Activated CD4-positive, alpha-beta T cell treated with anti-CD3 and anti-CD28 coated beads for 36 hours (primary cell): ENCODE measurements at regions of chr22 and their contacts with region 1.

Region 1: GRCh38 chr22:39598017-39598965 is 27.7 kb downstream of the CACNA1I start:
- DNase-seq: peak; percentile 94
- ATAC-seq: peak; percentile 86
- H3K4me3 Mint-ChIP-seq: peak overlapping the region; percentile 23
- H3K27ac Mint-ChIP-seq: peak overlapping the region; percentile 6
- H3K4me1 Mint-ChIP-seq: peaks cover 30% of the 10 kb centered on the region
- H3K27me3 Mint-ChIP-seq: peaks cover 4% of the 10 kb centered on the region

Region 2: DNA sequence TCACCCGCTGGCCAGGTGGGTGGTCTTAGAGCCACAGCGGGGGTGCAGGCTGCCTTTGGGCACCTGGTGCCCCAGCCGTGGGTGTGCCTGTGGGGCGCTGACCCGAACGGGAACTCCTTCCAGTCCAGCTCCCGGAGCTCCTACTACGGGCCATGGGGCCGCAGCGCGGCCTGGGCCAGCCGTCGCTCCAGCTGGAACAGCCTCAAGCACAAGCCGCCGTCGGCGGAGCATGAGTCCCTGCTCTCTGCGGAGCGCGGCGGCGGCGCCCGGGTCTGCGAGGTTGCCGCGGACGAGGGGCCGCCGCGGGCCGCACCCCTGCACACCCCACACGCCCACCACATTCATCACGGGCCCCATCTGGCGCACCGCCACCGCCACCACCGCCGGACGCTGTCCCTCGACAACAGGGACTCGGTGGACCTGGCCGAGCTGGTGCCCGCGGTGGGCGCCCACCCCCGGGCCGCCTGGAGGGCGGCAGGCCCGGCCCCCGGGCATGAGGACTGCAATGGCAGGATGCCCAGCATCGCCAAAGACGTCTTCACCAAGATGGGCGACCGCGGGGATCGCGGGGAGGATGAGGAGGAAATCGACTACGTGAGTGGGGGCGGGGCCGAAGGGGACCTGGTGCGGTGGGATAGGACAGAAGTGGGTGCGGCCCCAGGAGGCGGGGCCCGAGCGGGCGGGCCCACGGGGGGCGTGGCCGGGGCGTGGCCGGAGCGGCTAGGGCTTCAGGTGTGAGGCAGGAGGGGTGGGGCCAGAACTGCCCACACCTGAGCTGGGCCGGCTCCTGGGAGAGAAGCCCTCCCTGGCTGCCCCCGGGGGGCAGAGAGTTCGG is 63.8 kb after region 1 on chr22:
- CTCF ChIA-PET with region 1: no interaction called
- POLR2A ChIA-PET with region 1: no interaction called
- intact Hi-C with region 1: loop called in 1 of 2 experiments (anchors 1 kb)
- DNase-seq: peak; percentile 92
- ATAC-seq: peak; percentile 79
- H3K4me3 Mint-ChIP-seq: peak overlapping the region; percentile 69
- H3K27ac Mint-ChIP-seq: no peak overlapping the region
- H3K4me1 Mint-ChIP-seq: peaks cover 47% of the 10 kb centered on the region
- H3K27me3 Mint-ChIP-seq: peaks cover 4% of the 10 kb centered on the region

Region 3: GRCh38 chr22:39690881-39691605 is 92.8 kb after region 1 on chr22:
- CTCF ChIA-PET with region 1: no interaction called
- POLR2A ChIA-PET with region 1: no interaction called
- intact Hi-C with region 1: no loop called
- DNase-seq: peak; percentile 71
- ATAC-seq: peak; percentile 84
- H3K4me3 Mint-ChIP-seq: peak overlapping the region; percentile 19
- H3K27ac Mint-ChIP-seq: no peak overlapping the region
- H3K4me1 Mint-ChIP-seq: peaks cover 9% of the 10 kb centered on the region
- H3K27me3 Mint-ChIP-seq: peaks cover 9% of the 10 kb centered on the region

Region 4: DNA sequence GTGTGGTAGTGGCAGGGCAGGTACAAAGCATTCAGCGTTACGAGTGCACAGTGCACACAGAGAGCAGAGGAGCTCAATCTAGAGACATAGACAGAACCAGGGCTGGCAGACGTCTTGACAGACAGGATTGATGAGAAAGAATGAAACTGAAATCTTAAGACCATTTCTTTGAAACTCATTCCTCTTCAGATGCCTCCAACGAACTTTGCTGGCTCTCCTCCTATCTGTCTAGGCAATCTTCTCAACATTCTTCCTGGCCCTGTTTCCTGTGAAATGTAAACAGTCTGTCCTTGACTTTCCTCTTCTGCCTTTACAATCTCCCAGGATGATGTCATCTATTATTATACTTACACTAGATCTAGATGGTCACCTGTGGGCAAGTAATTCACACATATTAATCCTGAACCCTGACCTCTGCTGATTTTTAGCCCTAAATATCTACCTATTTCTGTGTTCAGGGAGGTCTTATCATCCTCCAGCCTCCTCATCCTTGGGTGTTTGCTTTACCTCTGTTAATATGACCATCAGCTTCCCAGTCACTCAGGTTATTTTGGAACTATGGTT is 175.8 kb after region 1 on chr22:
- CTCF ChIA-PET with region 1: no interaction called
- POLR2A ChIA-PET with region 1: no interaction called
- intact Hi-C with region 1: no loop called
- DNase-seq: peak; percentile 57
- ATAC-seq: peak; percentile 98
- H3K4me3 Mint-ChIP-seq: peak overlapping the region; percentile 6
- H3K27ac Mint-ChIP-seq: peak overlapping the region; percentile 58
- H3K4me1 Mint-ChIP-seq: peaks cover 34% of the 10 kb centered on the region
- H3K27me3 Mint-ChIP-seq: no peaks in the 10 kb centered on the region